ENCODE measurements at regions of chr6 and their contacts with region 1.

Region 1: GRCh38 chr6:155174576-155175211 is 89.1 kb upstream of the CLDN20 start:
- DNase-seq: peak; percentile 18 to 44 (median 33)
- H3K4me3 ChIP-seq: no peak overlapping the region
- H3K4me3 Mint-ChIP-seq: no peak overlapping the region
- H3K27ac ChIP-seq: no peak overlapping the region
- H3K27ac Mint-ChIP-seq: peak overlapping the region in 3 of 7 donors; percentile 15 to 42 (median 25)
- H3K4me1 ChIP-seq: no peaks in the 10 kb centered on the region
- H3K4me1 Mint-ChIP-seq: peaks cover 8% of the 10 kb centered on the region
- H3K27me3 ChIP-seq: no peaks in the 10 kb centered on the region
- H3K27me3 Mint-ChIP-seq: no peaks in the 10 kb centered on the region
- CTCF ChIP-seq: peak; percentile 50

Region 2: DNA sequence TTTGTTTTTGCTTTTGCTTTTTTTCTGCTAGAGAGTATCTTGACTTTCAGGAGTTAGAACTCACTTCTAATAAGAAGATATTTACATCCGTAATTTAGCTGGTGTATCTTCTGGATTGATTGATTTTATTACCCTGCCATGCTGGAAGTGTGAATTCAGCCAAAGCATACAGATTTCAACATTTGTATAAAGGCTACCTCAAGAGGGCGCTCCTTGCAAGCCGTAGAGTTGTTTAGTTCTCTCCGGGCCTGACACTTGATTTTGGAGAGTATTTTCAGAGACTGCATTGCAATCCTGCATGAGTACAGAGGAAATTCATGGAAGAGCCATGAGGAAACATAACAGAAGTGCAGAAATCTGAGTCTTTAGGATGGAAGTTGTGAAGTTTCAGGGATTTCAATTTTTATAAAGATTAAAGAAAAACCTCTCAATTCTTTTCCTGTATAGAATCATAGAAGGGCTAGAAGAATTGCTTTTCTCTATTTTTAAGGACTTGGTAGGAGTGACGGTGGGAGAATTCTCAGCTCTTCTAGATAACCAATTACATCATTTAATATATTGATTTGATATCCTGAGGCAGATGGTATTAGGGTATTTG is 246.3 kb before region 1 on chr6:
- intact Hi-C with region 1: loop called in 1 of 2 experiments (anchors 10 kb)
- DNase-seq: peak in 2 of 3 donors; percentile 16 to 23
- H3K4me3 ChIP-seq: no peak overlapping the region
- H3K4me3 Mint-ChIP-seq: no peak overlapping the region
- H3K27ac ChIP-seq: no peak overlapping the region
- H3K27ac Mint-ChIP-seq: no peak overlapping the region
- H3K4me1 ChIP-seq: no peaks in the 10 kb centered on the region
- H3K4me1 Mint-ChIP-seq: peaks cover 3% of the 10 kb centered on the region
- H3K27me3 ChIP-seq: no peaks in the 10 kb centered on the region
- H3K27me3 Mint-ChIP-seq: peaks cover 0 to 5% (median 0%) of the 10 kb centered on the region in 3 donors
- CTCF ChIP-seq: peak; percentile 81

Region 3: GRCh38 chr6:155248008-155249001 is 73.6 kb after region 1 on chr6:
- intact Hi-C with region 1: loop called (anchors 5 kb)
- DNase-seq: peak; percentile 19 to 41 (median 38)
- H3K4me3 ChIP-seq: no peak overlapping the region
- H3K4me3 Mint-ChIP-seq: no peak overlapping the region
- H3K27ac ChIP-seq: no peak overlapping the region
- H3K27ac Mint-ChIP-seq: no peak overlapping the region
- H3K4me1 ChIP-seq: no peaks in the 10 kb centered on the region
- H3K4me1 Mint-ChIP-seq: no peaks in the 10 kb centered on the region
- H3K27me3 ChIP-seq: no peaks in the 10 kb centered on the region
- H3K27me3 Mint-ChIP-seq: peaks cover 0 to 2% (median 1%) of the 10 kb centered on the region in 3 donors
- CTCF ChIP-seq: peak; percentile 71

Region 4: GRCh38 chr6:155264693-155265320 is 90.1 kb after region 1 on chr6:
- intact Hi-C with region 1: loop called in 1 of 2 experiments (anchors 5 kb)
- DNase-seq: no peak
- H3K4me3 ChIP-seq: no peak overlapping the region
- H3K4me3 Mint-ChIP-seq: no peak overlapping the region
- H3K27ac ChIP-seq: no peak overlapping the region
- H3K27ac Mint-ChIP-seq: no peak overlapping the region
- H3K4me1 ChIP-seq: no peaks in the 10 kb centered on the region
- H3K4me1 Mint-ChIP-seq: no peaks in the 10 kb centered on the region
- H3K27me3 ChIP-seq: no peaks in the 10 kb centered on the region
- H3K27me3 Mint-ChIP-seq: peaks cover 0 to 3% (median 1%) of the 10 kb centered on the region in 3 donors
- CTCF ChIP-seq: no peak

Measured in CD14-positive monocyte (primary cell).